ENCODE measurements at regions of chr17 and their contacts with region 1.

Region 1: DNA sequence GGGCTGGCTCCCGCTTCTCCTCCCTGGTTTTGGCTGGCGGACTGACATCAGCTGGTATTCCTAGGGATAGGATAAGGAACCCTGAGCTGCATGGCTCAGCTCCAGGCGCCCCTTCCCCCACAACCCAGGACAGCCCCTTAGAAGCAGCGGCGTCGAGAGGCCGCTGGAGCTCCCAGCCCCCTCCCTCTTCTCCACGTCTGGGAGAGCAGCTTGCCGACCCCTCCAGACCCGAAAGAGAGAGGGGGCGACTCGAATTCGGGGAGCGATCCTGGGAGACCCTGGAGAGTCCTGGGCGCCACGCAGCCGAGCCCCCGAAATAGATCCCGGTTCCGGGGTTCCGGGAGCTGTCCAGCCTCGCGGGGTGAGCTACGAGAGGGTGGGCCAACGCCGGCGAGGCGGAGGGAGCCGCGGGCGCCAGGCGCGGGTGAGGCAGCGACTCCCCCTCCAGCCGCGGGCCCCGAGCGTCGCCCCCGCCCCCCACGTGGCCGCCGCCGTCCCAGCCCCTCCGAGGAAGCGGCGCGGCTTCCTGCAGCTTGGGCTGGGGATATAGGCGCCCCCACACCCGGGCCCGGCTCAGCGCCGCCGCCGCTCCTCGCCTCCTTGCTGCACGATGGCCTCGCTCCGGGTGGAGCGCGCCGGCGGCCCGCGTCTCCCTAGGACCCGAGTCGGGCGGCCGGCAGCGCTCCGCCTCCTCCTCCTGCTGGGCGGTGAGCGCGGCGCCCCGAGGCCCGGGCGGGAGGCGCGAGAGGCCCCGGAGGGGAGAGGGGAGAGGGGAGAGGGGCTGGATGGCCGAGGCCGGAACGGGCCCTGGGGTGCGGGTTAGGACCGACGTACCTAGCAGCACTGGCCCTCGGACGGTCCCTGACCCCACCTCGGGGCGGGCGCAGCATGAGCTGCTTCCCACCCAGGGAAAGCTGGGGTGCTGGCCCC is at the start of gene RAMP2:
- DNase-seq: peak; percentile 52 to 67
- ATAC-seq: peak; percentile 25 to 50 (median 40)
- H3K4me3 ChIP-seq: peak within 1 kb of the TSS; percentile 68
- H3K27ac ChIP-seq: peak within 1 kb of the TSS; percentile 63
- H3K4me1 ChIP-seq: peaks cover 4% of the 10 kb centered on the region
- H3K27me3 ChIP-seq: peaks cover 0 to 38% (median 14%) of the 10 kb centered on the region in 3 donors
- CTCF ChIP-seq: no peak
- total RNA-seq, gene RAMP2: 9.2 to 39.8 (median 18.7) TPM

Region 2: GRCh38 chr17:42577532-42578281 is 183.2 kb before region 1 on chr17 and contains the start of gene PSMC3IP:
- intact Hi-C with region 1: loop called (anchors 5 kb)
- DNase-seq: peak; percentile 96 to 98
- ATAC-seq: peak; percentile 95 to 98 (median 96)
- H3K4me3 ChIP-seq: peak within 1 kb of the TSS; percentile 88
- H3K27ac ChIP-seq: peak within 1 kb of the TSS; percentile 86
- H3K4me1 ChIP-seq: peaks cover 11% of the 10 kb centered on the region
- H3K27me3 ChIP-seq: no peaks in the 10 kb centered on the region
- CTCF ChIP-seq: peak; percentile 22
- total RNA-seq, gene PSMC3IP: 0.26 to 3.3 (median 1.4) TPM

Region 3: DNA sequence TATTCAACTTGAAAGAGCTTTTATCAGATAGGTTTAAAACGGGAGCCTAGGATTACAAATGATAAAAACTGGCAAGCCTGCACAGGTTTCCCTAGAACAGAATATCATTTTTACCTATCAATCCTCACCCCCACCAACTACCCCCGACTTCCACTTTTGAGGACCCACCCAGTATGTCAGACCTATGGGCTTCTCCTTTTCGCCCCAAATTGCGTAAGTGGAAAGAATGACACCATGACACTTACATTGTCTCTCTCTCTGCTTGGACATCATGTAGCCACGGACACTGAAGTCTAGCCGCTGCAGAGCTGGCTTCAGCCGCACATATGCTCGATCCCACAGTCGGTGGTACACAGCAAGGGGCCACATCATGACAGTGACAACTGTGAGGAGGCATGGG is 176.0 kb before region 1 on chr17:
- intact Hi-C with region 1: loop called in 1 of 2 experiments (anchors 5 kb)
- DNase-seq: no peak
- ATAC-seq: no peak
- H3K4me3 ChIP-seq: no peak overlapping the region
- H3K27ac ChIP-seq: peak overlapping the region; percentile 27
- H3K4me1 ChIP-seq: no peaks in the 10 kb centered on the region
- H3K27me3 ChIP-seq: no peaks in the 10 kb centered on the region
- CTCF ChIP-seq: no peak

Region 4: GRCh38 chr17:42642336-42642735 is 118.6 kb before region 1 on chr17:
- intact Hi-C with region 1: no loop called
- DNase-seq: no peak
- ATAC-seq: no peak
- H3K4me3 ChIP-seq: no peak overlapping the region
- H3K27ac ChIP-seq: no peak overlapping the region
- H3K4me1 ChIP-seq: no peaks in the 10 kb centered on the region
- H3K27me3 ChIP-seq: no peaks in the 10 kb centered on the region
- CTCF ChIP-seq: no peak